ENCODE measurements at regions of chr9 and their contacts with region 1.

Region 1: DNA sequence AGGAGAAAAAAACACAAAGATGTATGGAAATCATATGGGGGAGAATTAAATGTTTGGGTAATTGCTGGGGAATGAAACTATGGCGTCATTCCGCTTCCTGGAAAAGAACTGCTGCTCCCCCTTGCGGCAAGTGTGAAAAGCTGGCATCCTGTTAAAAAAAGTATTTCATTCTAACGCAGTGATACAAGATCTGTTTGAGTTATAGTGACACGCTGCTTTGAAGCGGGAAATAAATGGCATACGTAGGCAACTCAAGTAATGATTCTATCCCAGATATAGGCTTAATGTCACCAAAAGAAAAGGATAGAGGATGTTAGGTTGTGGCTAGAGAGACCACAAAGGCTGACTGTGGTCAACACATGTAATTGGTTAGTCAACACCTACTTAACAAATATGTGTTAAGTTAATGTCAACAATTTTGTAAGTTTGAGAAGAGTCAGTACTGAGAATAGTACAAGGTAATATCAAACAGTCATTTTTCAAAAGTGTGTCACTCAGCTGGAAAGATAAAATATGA is 70.2 kb upstream of the ALDH1A1 start:
- DNase-seq: peak in 1 of 2 experiments; percentile 58
- H3K4me3 ChIP-seq: no peak overlapping the region
- H3K27ac ChIP-seq: no peak overlapping the region
- H3K4me1 ChIP-seq: no peaks in the 10 kb centered on the region
- H3K27me3 ChIP-seq: no peaks in the 10 kb centered on the region
- CTCF ChIP-seq: peak; percentile 54 to 80 (median 70)
- EP300 ChIP-seq: no peak
- POLR2A ChIP-seq: no peak
- RAD21 ChIP-seq: peak; percentile 80 to 84

Region 2: DNA sequence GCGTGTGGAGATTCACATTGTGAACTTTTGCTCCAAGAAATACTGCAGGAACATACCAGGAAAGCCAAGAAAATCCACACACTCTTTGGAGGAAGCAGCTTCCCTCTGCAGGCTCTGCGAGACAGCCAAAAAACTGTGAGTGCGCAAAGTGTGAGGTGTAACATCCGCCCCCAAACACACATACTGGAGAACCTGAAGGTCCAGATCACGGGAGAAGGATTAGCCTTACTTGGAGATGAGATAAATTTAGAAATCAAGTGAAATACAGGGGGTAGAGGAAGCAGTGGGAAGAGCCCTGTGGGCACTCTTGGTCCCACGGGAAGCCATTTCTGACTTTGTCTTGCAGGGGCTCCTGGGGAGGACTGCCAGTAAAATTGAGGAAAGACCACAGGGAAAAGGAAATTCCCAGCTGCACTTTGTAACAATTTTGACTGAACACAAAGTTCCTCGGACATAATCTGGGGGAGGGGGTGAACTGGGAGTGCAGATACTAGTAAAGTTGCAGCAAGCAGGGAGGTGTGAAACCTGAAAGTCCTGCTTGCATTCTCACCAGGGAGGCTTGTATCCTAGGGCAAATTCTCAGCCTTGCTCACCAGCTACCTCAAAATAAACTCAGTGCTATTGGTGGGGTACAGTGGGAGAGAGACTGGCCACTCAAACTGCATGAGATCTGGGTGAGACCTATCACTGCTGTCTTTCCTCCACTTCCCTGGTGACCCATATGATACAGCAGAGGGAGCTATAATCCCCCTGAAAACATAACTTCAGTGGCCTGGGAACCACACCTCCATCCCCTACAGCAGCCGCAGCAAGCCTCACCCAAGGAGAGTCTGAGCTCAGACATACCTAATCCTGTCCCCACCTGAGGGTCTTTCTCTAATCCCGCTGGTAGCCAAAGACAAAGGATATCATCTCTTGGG is 179.3 kb before region 1 on chr9:
- CTCF ChIA-PET with region 1: interaction called, 12 read pairs
- POLR2A ChIA-PET with region 1: no interaction called
- DNase-seq: no peak
- H3K4me3 ChIP-seq: no peak overlapping the region
- H3K27ac ChIP-seq: no peak overlapping the region
- H3K4me1 ChIP-seq: peaks cover 0 to 2% (median 0%) of the 10 kb centered on the region in 4 experiments; a peak in 1 of 7 replicates
- H3K27me3 ChIP-seq: no peaks in the 10 kb centered on the region
- CTCF ChIP-seq: peak in 2 of 3 experiments; percentile 20 to 58; a peak in 3 of 4 replicates
- EP300 ChIP-seq: no peak
- POLR2A ChIP-seq: no peak
- RAD21 ChIP-seq: peak; percentile 54 to 61

Region 3: DNA sequence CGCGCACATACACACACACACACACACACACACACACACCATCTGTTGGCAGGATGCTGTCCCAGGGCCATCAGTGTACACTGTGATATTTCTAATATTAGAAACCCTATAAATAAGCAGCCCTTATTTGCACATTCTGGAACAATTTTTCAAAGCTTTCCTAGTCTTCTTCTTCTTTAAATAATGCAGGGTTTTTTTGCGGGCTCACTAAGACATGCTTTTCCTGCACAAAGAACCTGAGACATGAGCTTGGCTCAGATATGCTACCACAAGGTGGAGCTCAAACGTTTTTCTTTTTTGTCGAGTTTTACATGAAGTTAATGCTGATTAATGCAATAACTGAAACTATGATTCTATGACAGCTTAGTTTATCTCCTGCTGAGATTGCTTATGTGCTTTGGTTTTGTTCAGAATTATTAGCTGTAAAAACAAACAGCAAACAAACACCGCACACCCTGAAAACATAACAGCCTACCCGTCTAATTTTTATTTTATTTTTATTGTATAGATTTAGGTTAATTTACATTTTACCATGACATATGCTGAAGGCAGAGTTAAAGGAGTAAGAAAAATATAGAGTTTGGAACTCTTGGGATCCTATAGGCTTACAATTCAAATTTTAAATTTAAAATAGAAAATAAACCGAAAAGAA is 166.0 kb before region 1 on chr9:
- CTCF ChIA-PET with region 1: interaction called, 44 read pairs
- POLR2A ChIA-PET with region 1: no interaction called
- DNase-seq: no peak
- H3K4me3 ChIP-seq: no peak overlapping the region
- H3K27ac ChIP-seq: no peak overlapping the region
- H3K4me1 ChIP-seq: peaks cover 0 to 2% (median 1%) of the 10 kb centered on the region in 4 experiments; a peak in 3 of 7 replicates
- H3K27me3 ChIP-seq: no peaks in the 10 kb centered on the region
- CTCF ChIP-seq: peak in 2 of 3 experiments; percentile 45 to 54; a peak in 2 of 4 replicates
- EP300 ChIP-seq: no peak
- POLR2A ChIP-seq: no peak
- RAD21 ChIP-seq: peak; percentile 58 to 67

Region 4: GRCh38 chr9:72871685-72872084 is 151.4 kb before region 1 on chr9:
- CTCF ChIA-PET with region 1: interaction called, 38 read pairs
- POLR2A ChIA-PET with region 1: no interaction called
- DNase-seq: no peak
- H3K4me3 ChIP-seq: no peak overlapping the region
- H3K27ac ChIP-seq: no peak overlapping the region
- H3K4me1 ChIP-seq: peaks cover 0 to 3% (median 1%) of the 10 kb centered on the region in 4 experiments; a peak in 3 of 7 replicates
- H3K27me3 ChIP-seq: no peaks in the 10 kb centered on the region
- CTCF ChIP-seq: peak in 2 of 3 experiments; percentile 21 to 37; a peak in 2 of 4 replicates
- EP300 ChIP-seq: no peak
- POLR2A ChIP-seq: no peak
- RAD21 ChIP-seq: peak; percentile 55 to 61

Region 5: GRCh38 chr9:73009649-73010288 is 13.3 kb before region 1 on chr9:
- CTCF ChIA-PET with region 1: interaction called, 30 read pairs
- POLR2A ChIA-PET with region 1: no interaction called
- DNase-seq: no peak
- H3K4me3 ChIP-seq: no peak overlapping the region
- H3K27ac ChIP-seq: no peak overlapping the region
- H3K4me1 ChIP-seq: no peaks in the 10 kb centered on the region
- H3K27me3 ChIP-seq: no peaks in the 10 kb centered on the region
- CTCF ChIP-seq: peak in 1 of 3 experiments; percentile 9; a peak in 1 of 4 replicates
- EP300 ChIP-seq: no peak
- POLR2A ChIP-seq: no peak
- RAD21 ChIP-seq: no peak

Region 6: GRCh38 chr9:73038613-73039012 is 15.5 kb after region 1 on chr9:
- CTCF ChIA-PET with region 1: interaction called, 17 read pairs
- POLR2A ChIA-PET with region 1: no interaction called
- DNase-seq: no peak
- H3K4me3 ChIP-seq: no peak overlapping the region
- H3K27ac ChIP-seq: no peak overlapping the region
- H3K4me1 ChIP-seq: peaks cover 0 to 2% (median 1%) of the 10 kb centered on the region in 4 experiments; a peak in 1 of 7 replicates
- H3K27me3 ChIP-seq: no peaks in the 10 kb centered on the region
- CTCF ChIP-seq: no peak
- EP300 ChIP-seq: no peak
- POLR2A ChIP-seq: no peak
- RAD21 ChIP-seq: no peak

Region 7: GRCh38 chr9:73081979-73082657 is 59.0 kb after region 1 on chr9:
- CTCF ChIA-PET with region 1: interaction called, 12 read pairs
- POLR2A ChIA-PET with region 1: no interaction called
- DNase-seq: no peak
- H3K4me3 ChIP-seq: no peak overlapping the region
- H3K27ac ChIP-seq: no peak overlapping the region
- H3K4me1 ChIP-seq: peaks cover 0 to 7% (median 0%) of the 10 kb centered on the region in 4 experiments; a peak in 1 of 7 replicates
- H3K27me3 ChIP-seq: no peaks in the 10 kb centered on the region
- CTCF ChIP-seq: peak in 2 of 3 experiments; percentile 69; a peak in 3 of 4 replicates
- EP300 ChIP-seq: no peak
- POLR2A ChIP-seq: no peak
- RAD21 ChIP-seq: peak; percentile 79 to 82